B cell (primary cell): ENCODE measurements at regions of chr20 and their contacts with region 1.

Region 1: DNA sequence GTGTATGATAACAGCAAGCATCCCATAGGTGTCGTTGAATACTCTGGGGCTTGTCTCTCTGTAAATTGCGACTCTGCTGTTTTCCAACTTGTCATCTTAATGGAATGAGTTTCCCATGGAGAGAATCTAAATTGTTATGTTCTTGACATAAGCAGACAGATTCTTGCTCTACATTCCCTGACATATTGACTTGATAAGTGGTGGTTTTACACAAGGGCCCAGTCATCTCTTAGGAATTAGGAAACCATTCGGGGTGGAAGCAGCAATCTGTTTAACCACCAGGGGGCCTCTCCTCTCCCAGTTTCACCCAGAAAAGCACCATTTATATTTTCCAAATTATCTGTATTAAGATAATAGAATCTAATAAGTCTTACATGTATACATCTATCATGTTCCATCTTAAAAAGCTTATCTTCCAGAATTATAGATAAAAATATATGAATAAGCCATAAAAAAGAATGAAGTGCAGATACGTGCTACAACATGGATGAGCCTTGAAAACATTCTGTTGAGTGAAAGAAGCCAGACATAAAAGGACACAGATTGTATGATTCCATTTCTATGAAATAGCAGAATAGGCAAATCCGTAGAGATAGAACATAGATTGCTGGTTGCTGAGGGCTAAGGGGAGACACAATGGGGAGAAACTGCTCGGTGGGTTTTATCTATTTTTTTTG is 23.1 kb upstream of the MROH8 start:
- DNase-seq: peak; percentile 56
- ATAC-seq: peak; percentile 58
- H3K4me3 ChIP-seq: no peak overlapping the region
- H3K4me3 Mint-ChIP-seq: no peak overlapping the region
- H3K27ac ChIP-seq: no peak overlapping the region
- H3K27ac Mint-ChIP-seq: no peak overlapping the region
- H3K4me1 ChIP-seq: no peaks in the 10 kb centered on the region
- H3K4me1 Mint-ChIP-seq: no peaks in the 10 kb centered on the region
- H3K27me3 ChIP-seq: no peaks in the 10 kb centered on the region
- H3K27me3 Mint-ChIP-seq: no peaks in the 10 kb centered on the region
- CTCF ChIP-seq: peak; percentile 85

Region 2: DNA sequence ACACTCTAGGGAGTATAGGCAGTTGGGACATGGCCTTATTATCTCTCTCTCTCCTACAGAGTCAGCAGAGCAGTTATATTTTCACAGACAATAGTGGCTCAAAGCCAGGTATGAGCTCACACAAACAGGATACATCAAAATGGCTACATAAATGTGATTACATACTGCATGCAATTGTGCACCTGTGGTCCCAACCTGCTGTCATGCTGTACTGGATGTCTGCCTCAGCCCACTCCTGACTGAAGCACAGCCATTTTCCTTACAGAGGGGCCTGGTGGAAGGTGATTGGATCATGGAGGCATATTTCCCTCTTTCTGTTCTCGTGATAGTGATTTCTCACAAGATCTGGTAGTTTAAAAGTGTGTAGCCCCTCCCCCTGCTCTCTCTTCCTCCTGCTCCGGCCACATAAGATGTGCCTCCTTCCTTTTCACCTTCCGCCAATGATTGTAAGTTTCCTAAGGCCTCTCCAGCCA is 213.9 kb before region 1 on chr20:
- CTCF ChIA-PET with region 1: no interaction called
- POLR2A ChIA-PET with region 1: no interaction called
- intact Hi-C with region 1: no loop called
- DNase-seq: no peak
- ATAC-seq: no peak
- H3K4me3 ChIP-seq: no peak overlapping the region
- H3K4me3 Mint-ChIP-seq: no peak overlapping the region
- H3K27ac ChIP-seq: no peak overlapping the region
- H3K27ac Mint-ChIP-seq: no peak overlapping the region
- H3K4me1 ChIP-seq: peaks cover 10 to 13% of the 10 kb centered on the region in 2 donors
- H3K4me1 Mint-ChIP-seq: peaks cover 15% of the 10 kb centered on the region
- H3K27me3 ChIP-seq: peaks cover 0 to 2% (median 0%) of the 10 kb centered on the region in 4 experiments
- H3K27me3 Mint-ChIP-seq: no peaks in the 10 kb centered on the region
- CTCF ChIP-seq: no peak

Region 3: DNA sequence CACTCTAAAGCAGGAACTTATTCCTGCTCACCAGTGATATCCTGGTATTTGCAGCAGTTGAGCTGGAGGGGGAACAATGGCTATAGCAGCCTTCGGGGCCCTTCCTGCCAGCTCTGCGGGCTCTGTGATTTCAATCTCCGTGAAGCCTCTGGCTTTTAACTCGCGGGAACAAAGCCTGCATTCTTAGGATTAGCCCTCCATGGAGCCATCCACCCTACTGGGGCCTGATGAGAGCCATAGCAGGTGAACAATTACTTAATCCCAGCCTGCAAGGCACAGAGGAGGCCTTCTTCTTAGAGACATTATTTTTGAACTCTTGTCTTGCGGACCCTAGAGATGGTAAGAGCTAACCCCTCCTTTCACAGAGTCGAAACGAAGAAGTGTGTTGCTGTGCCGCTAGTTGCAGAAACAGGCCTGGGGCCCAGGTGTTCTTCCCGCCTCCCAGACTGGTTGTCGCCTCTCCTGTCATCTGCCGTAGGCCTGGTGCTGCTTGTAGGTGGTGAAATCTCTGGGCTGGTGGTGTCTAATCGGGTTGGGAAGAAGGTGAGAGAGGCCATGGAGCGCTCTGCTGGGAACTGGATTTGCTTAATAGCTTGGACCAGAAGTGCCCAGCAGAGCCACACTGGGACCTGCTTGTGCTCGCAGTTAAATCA is 49.5 kb after region 1 on chr20:
- CTCF ChIA-PET with region 1: no interaction called
- POLR2A ChIA-PET with region 1: no interaction called
- intact Hi-C with region 1: no loop called
- DNase-seq: no peak
- ATAC-seq: no peak
- H3K4me3 ChIP-seq: no peak overlapping the region
- H3K4me3 Mint-ChIP-seq: no peak overlapping the region
- H3K27ac ChIP-seq: no peak overlapping the region
- H3K27ac Mint-ChIP-seq: no peak overlapping the region
- H3K4me1 ChIP-seq: no peaks in the 10 kb centered on the region
- H3K4me1 Mint-ChIP-seq: no peaks in the 10 kb centered on the region
- H3K27me3 ChIP-seq: no peaks in the 10 kb centered on the region
- H3K27me3 Mint-ChIP-seq: no peaks in the 10 kb centered on the region
- CTCF ChIP-seq: no peak

Region 4: GRCh38 chr20:37519508-37520128 is 317.2 kb after region 1 on chr20:
- CTCF ChIA-PET with region 1: no interaction called
- POLR2A ChIA-PET with region 1: interaction called, 11 read pairs
- intact Hi-C with region 1: no loop called
- DNase-seq: no peak
- ATAC-seq: peak; percentile 43
- H3K4me3 ChIP-seq: no peak overlapping the region
- H3K4me3 Mint-ChIP-seq: no peak overlapping the region
- H3K27ac ChIP-seq: no peak overlapping the region
- H3K27ac Mint-ChIP-seq: no peak overlapping the region
- H3K4me1 ChIP-seq: peaks cover 15 to 19% of the 10 kb centered on the region in 2 donors
- H3K4me1 Mint-ChIP-seq: peaks cover 48% of the 10 kb centered on the region
- H3K27me3 ChIP-seq: no peaks in the 10 kb centered on the region
- H3K27me3 Mint-ChIP-seq: no peaks in the 10 kb centered on the region
- CTCF ChIP-seq: no peak